PC-3 (cell line): ENCODE measurements at regions of chr12 and their contacts with region 1.

Region 1: DNA sequence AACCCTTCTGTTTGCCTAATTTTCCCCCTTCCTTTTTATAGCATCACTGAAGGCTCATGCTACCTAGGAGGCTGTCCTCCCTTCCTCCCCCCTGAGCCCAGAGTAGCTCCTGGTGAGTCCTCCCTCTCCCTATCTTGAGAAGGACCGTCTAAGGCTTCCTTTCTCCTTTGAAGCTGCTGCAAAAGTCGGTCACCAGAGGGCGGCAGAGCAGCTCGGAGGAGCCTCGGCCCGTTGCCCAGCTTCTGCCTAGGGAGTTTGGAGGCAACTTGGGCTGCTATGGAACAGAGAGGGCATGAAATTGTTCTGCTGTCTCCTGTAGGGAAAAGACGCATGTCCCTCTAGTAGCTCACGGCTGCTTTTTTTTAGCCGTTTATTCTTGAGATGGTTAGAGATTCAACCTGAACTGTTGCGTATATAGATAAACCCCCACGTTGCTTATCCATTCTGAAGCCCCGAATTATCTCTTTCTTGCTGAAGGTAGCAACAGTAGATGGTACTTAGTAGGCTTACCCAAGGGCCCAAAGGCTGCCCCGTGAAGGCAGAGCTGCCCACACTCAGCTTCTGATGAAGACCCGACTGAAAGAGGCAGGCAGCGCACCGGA is 5.7 kb downstream of the WNT5B start:
- DNase-seq: peak; percentile 78
- ATAC-seq: peak; percentile 68
- H3K4me3 ChIP-seq: no peak overlapping the region
- H3K27ac ChIP-seq: no peak overlapping the region
- H3K4me1 ChIP-seq: 0 out of 2 replicates have a peak, but pooled peaks cover 2% of the 10 kb centered on the region
- H3K27me3 ChIP-seq: peaks cover 5% of the 10 kb centered on the region
- CTCF ChIP-seq: peak; percentile 86

Region 2: DNA sequence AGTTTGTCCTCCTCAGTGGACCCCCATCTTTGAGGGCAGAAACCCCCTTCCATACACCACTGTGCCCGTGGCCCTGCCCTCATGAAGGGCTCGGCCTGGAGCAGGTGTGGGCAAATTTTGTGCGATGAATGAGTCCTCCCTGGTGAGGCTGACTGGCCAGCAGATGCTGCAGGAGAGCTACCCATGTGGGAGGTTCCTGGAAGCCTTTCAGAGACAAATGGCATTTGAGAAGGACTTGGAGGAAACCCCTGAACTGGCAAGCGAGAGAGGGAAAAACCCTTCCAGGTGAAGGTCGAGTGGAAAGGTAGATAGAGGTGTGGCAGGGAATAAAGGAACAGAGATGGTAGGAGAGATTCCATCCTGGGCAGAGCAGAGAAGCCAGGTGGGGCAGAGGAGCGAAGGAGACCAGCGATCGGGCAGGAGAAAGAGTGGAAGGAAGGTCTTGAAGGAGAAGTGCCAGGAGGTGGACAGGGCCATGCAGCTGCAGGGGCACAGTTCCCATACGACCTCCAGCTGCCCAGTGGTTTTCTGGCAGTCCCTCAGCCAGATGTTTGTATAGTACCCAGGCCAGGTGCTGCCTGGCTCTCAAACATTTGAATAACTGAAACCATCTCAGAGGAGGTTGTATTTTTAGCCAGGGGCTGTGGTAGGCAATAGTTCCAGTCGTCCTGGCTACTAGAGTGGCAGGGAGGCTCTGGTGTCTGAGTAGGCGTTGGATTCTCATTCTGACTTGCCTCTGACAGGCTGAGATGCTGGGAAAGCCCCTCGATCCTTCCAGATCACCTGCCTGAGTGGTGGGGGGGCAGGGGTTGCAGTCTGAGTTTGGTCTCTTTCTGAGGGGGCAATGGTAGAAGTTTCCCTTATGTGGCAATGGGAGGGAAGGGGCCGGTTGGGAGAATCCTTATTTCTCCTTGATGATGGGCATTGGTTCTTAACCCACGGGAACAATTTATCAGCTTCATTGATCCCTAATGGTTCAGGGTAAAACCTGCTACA is 80.4 kb before region 1 on chr12:
- CTCF ChIA-PET with region 1: no interaction called
- POLR2A ChIA-PET with region 1: no interaction called
- intact Hi-C with region 1: no loop called
- DNase-seq: no peak
- ATAC-seq: no peak
- H3K4me3 ChIP-seq: no peak overlapping the region
- H3K27ac ChIP-seq: no peak overlapping the region
- H3K4me1 ChIP-seq: no peaks in the 10 kb centered on the region
- H3K27me3 ChIP-seq: no peaks in the 10 kb centered on the region
- CTCF ChIP-seq: no peak

Region 3: DNA sequence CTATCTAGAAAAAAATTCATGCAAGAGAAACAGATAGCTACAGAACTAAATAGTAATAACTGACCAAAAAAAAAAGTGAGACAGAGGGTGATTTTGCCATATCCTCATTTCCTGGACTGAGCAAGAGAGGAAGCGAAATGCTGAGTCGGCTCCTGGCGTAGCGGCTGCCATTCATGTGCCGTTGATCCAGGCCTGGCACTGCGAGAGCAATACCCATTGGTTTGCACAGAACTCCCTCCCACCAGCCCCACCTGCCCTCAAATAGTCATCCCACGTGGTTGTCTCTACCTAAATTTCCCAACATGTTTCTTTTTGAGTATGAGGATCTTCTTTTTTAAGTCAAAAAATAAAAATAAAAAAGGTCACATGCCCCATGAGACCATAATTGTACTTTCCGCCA is 15.1 kb before region 1 on chr12:
- CTCF ChIA-PET with region 1: no interaction called
- POLR2A ChIA-PET with region 1: no interaction called
- intact Hi-C with region 1: no loop called
- DNase-seq: no peak
- ATAC-seq: no peak
- H3K4me3 ChIP-seq: no peak overlapping the region
- H3K27ac ChIP-seq: no peak overlapping the region
- H3K4me1 ChIP-seq: no peaks in the 10 kb centered on the region
- H3K27me3 ChIP-seq: no peaks in the 10 kb centered on the region
- CTCF ChIP-seq: no peak

Region 4: GRCh38 chr12:1644534-1645438 is 10.1 kb after region 1 on chr12:
- CTCF ChIA-PET with region 1: interaction called, 10 read pairs
- POLR2A ChIA-PET with region 1: no interaction called
- intact Hi-C with region 1: no loop called
- DNase-seq: no peak
- ATAC-seq: no peak
- H3K4me3 ChIP-seq: no peak overlapping the region
- H3K27ac ChIP-seq: no peak overlapping the region
- H3K4me1 ChIP-seq: peaks cover 11% of the 10 kb centered on the region
- H3K27me3 ChIP-seq: no peaks in the 10 kb centered on the region
- CTCF ChIP-seq: no peak

Region 5: GRCh38 chr12:1795785-1796514 is 161.3 kb after region 1 on chr12:
- CTCF ChIA-PET with region 1: interaction called, 9 read pairs
- POLR2A ChIA-PET with region 1: no interaction called
- intact Hi-C with region 1: loop called (anchors 5 kb)
- DNase-seq: peak; percentile 88
- ATAC-seq: peak; percentile 100
- H3K4me3 ChIP-seq: peak overlapping the region; percentile 58
- H3K27ac ChIP-seq: no peak overlapping the region
- H3K4me1 ChIP-seq: peaks cover 5% of the 10 kb centered on the region; the same call in 1 of the 2 replicates
- H3K27me3 ChIP-seq: no peaks in the 10 kb centered on the region
- CTCF ChIP-seq: peak; percentile 84

Region 6: DNA sequence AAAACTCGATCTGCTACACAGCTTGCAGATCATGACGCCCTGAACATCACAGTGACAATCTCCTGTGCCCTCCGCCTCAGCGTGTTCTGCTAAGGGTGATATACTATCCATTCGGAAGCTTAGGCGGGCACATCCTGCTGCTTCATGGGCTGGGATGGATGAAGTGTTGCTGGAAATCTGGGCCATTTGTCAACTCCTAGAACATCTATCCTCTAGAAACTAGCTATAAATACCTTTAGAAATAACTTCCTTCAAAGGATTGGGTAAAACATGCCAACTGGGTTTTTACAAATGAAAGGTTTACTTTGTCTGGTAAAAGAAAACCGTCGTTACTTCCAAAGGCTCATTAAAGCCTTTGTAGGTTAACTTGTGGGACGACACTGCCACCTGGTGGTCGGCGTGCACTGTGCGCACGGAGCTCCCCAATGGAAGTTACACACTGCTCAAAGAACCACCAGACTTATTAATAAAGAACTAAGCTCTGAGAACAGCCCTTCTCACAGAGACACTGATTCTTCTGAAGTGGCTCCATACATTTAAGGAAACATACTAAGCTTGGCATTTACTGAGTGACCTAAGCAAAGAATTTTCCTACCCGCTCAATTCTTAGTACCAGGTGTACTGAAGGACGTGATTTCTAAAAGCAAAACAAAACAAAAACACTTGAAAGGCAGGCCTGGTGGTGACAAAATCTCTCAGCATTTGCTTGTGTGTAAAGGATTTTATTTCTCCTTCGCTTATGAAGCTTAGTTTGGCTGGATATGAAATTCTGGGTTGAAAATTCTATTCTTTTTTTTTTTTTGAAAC is 305.3 kb after region 1 on chr12:
- CTCF ChIA-PET with region 1: interaction called, 5 read pairs
- POLR2A ChIA-PET with region 1: no interaction called
- intact Hi-C with region 1: loop called (anchors 5 kb)
- DNase-seq: peak; percentile 81
- ATAC-seq: peak; percentile 64
- H3K4me3 ChIP-seq: no peak overlapping the region
- H3K27ac ChIP-seq: no peak overlapping the region
- H3K4me1 ChIP-seq: peaks cover 21% of the 10 kb centered on the region
- H3K27me3 ChIP-seq: no peaks in the 10 kb centered on the region
- CTCF ChIP-seq: peak; percentile 91